AG04450 (cell line): ENCODE measurements at regions of chr3 and their contacts with region 1.

Region 1: DNA sequence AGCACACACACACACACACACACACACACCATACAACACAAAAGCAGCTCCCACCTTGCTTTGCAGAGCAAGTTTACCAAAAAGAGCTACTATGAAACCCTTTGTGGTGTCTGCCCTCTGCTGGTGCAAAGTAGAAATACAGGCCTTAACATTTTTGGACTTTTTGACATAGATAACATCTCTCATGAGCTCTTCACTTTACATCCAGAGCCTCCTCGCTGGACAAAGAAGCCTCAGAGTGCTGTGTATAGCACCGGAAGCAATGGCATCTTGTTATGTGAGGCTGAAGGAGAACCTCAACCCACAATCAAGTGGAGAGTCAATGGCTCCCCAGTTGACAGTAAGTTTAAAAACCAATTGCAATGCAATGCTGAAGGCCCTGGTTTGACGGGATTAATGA is 157.9 kb downstream of the CHL1 start:
- DNase-seq: peak; percentile 29
- H3K4me3 ChIP-seq: no peak overlapping the region
- H3K27ac ChIP-seq: no peak overlapping the region
- H3K27me3 ChIP-seq: no peaks in the 10 kb centered on the region
- CTCF ChIP-seq: peak; percentile 88

Region 2: GRCh38 chr3:151614-152189 is 202.7 kb before region 1 on chr3:
- CTCF ChIA-PET with region 1: interaction called, 14 read pairs
- POLR2A ChIA-PET with region 1: no interaction called
- DNase-seq: no peak
- H3K4me3 ChIP-seq: no peak overlapping the region
- H3K27ac ChIP-seq: no peak overlapping the region
- H3K27me3 ChIP-seq: no peaks in the 10 kb centered on the region
- CTCF ChIP-seq: no peak

Region 3: DNA sequence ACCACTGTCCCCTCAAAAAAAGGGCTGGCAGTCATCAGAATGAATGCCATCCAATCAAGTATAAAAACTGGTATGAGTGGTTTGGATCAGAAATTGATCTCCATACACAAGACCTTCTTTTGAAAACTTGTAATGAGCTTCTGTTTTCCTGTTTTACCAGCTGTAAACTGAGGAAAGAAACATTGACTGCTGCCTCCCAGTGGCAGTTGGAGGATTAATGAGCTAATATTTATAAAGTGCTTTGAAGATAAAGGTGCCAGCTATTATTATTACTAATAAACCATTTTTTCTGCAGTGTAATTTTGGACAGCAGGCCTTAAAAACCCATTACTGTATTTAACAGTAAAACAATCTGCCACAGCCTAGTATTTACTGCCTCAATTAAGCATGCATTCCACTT is 146.5 kb before region 1 on chr3:
- CTCF ChIA-PET with region 1: interaction called, 12 read pairs
- POLR2A ChIA-PET with region 1: no interaction called
- DNase-seq: no peak
- H3K4me3 ChIP-seq: no peak overlapping the region
- H3K27ac ChIP-seq: no peak overlapping the region
- H3K27me3 ChIP-seq: no peaks in the 10 kb centered on the region
- CTCF ChIP-seq: no peak

Region 4: GRCh38 chr3:264394-265156 is 89.9 kb before region 1 on chr3:
- CTCF ChIA-PET with region 1: interaction called, 14 read pairs
- POLR2A ChIA-PET with region 1: no interaction called
- DNase-seq: peak; percentile 93
- H3K4me3 ChIP-seq: no peak overlapping the region
- H3K27ac ChIP-seq: no peak overlapping the region
- H3K27me3 ChIP-seq: no peaks in the 10 kb centered on the region
- CTCF ChIP-seq: no peak

Region 5: GRCh38 chr3:317012-317411 is 37.4 kb before region 1 on chr3:
- CTCF ChIA-PET with region 1: interaction called, 14 read pairs
- POLR2A ChIA-PET with region 1: no interaction called
- DNase-seq: no peak
- H3K4me3 ChIP-seq: no peak overlapping the region
- H3K27ac ChIP-seq: no peak overlapping the region
- H3K27me3 ChIP-seq: no peaks in the 10 kb centered on the region
- CTCF ChIP-seq: no peak

Region 6: GRCh38 chr3:339351-339750 is 15.1 kb before region 1 on chr3:
- CTCF ChIA-PET with region 1: interaction called, 38 read pairs
- POLR2A ChIA-PET with region 1: no interaction called
- DNase-seq: no peak
- H3K4me3 ChIP-seq: no peak overlapping the region
- H3K27ac ChIP-seq: no peak overlapping the region
- H3K27me3 ChIP-seq: no peaks in the 10 kb centered on the region
- CTCF ChIP-seq: no peak

Region 7: GRCh38 chr3:933326-933725 is 578.9 kb after region 1 on chr3:
- CTCF ChIA-PET with region 1: no interaction called
- POLR2A ChIA-PET with region 1: no interaction called
- DNase-seq: no peak
- H3K4me3 ChIP-seq: no peak overlapping the region
- H3K27ac ChIP-seq: no peak overlapping the region
- H3K27me3 ChIP-seq: no peaks in the 10 kb centered on the region
- CTCF ChIP-seq: no peak